Activated CD8-positive, alpha-beta T cell treated with anti-CD3 and anti-CD28 coated beads for 36 hours (primary cell): ENCODE measurements at regions of chr1 and their contacts with region 1.

Region 1: GRCh38 chr1:94854458-94855306 is 34.5 kb downstream of the SLC44A3 start:
- DNase-seq: peak; percentile 91
- ATAC-seq: peak; percentile 99
- H3K4me3 Mint-ChIP-seq: no peak overlapping the region
- H3K27ac Mint-ChIP-seq: no peak overlapping the region
- H3K4me1 Mint-ChIP-seq: no peaks in the 10 kb centered on the region
- H3K27me3 Mint-ChIP-seq: peaks cover 2% of the 10 kb centered on the region
- CTCF ChIP-seq: peak; percentile 87

Region 2: DNA sequence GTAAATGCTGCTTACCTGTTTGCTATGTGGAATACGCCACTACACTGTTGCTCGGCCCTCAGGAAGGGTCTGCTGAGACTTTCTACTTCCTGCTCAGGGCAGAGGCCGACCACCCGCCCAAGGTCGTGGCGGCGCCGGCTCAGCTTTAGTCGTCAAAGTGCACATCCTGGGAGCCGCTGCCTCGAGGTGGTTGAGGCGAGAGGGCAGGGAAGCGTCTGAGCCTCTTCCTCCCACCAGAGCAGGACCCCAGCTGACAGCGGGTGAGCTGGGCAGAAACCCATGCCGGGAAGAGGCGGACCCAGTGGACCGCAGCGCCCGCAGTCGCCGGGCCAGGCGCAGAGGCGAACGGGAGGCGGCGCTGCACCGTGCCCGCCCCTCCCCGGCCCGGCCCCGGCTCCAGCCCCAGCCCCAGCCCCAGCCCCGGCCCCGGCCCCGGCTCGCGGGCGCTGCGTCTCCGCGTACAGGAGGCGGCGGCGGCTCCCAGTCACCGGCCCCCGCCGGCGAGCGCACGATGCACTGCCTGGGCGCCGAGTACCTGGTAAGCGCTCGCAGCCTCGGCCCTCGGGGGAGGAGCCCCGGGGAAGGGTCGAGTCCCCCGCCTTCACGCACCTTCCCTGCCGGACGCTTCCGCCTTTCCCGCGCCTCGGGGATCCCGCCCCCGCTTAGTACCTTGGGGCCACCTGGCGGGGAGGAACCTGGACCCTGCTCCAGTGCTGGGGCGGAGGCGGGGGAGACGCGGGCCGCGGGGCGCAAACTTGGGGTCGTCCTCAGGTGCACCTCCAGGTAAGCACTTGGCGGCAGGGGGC is 34.5 kb before region 1 on chr1 and contains the start of gene SLC44A3:
- CTCF ChIA-PET with region 1: no interaction called
- POLR2A ChIA-PET with region 1: no interaction called
- intact Hi-C with region 1: no loop called
- DNase-seq: peak; percentile 30
- ATAC-seq: peak; percentile 77
- H3K4me3 Mint-ChIP-seq: peak within 1 kb of the TSS; percentile 54
- H3K27ac Mint-ChIP-seq: no peak within 1 kb of the TSS
- H3K4me1 Mint-ChIP-seq: peaks cover 3% of the 10 kb centered on the region
- H3K27me3 Mint-ChIP-seq: peaks cover 42% of the 10 kb centered on the region
- CTCF ChIP-seq: no peak
- total RNA-seq, gene SLC44A3: not detected

Region 3: DNA sequence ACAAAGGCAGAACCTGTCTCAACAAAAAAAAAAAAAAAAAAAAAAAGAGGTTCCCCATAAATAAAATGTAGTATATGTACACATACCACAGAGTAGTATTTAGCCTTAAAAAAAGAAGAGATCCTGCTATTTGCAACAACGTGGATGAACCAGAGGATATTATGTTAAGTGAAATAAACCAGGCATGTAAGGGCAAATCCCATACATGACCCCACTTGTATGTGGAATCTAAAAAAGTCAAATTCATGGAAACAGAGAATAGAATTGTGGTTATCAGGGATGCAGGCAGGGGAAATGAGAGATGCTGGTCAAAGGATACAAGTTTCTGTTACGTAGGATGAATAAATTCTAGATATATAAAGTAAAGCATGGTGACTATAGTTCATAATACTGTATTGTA is 17.8 kb before region 1 on chr1:
- CTCF ChIA-PET with region 1: interaction called, 12 read pairs
- POLR2A ChIA-PET with region 1: no interaction called
- intact Hi-C with region 1: no loop called
- DNase-seq: no peak
- ATAC-seq: no peak
- H3K4me3 Mint-ChIP-seq: no peak overlapping the region
- H3K27ac Mint-ChIP-seq: no peak overlapping the region
- H3K4me1 Mint-ChIP-seq: no peaks in the 10 kb centered on the region
- H3K27me3 Mint-ChIP-seq: peaks cover 5% of the 10 kb centered on the region
- CTCF ChIP-seq: no peak

Region 4: DNA sequence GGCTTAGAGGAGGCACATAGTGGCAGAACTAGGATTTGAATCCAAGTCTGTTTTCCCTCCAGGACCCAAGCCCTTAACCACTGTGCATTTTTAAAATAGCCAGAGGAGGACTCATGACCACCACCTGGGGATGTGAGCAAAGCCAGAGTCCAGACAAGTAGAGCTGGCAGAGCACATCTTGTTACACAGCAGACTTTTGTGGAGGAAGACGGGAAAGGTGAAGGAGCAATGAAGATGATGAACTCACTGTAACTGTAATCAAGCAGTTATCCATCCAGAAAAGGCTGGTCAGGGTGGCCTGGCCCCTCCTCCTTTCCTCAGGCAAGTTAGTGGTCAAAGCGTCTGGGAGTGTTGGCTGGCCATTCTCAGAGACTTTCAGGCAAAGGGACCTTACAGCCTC is 16.3 kb after region 1 on chr1:
- CTCF ChIA-PET with region 1: interaction called, 31 read pairs
- POLR2A ChIA-PET with region 1: no interaction called
- intact Hi-C with region 1: no loop called
- DNase-seq: no peak
- ATAC-seq: no peak
- H3K4me3 Mint-ChIP-seq: no peak overlapping the region
- H3K27ac Mint-ChIP-seq: no peak overlapping the region
- H3K4me1 Mint-ChIP-seq: peaks cover 7% of the 10 kb centered on the region
- H3K27me3 Mint-ChIP-seq: no peaks in the 10 kb centered on the region
- CTCF ChIP-seq: no peak

Region 5: DNA sequence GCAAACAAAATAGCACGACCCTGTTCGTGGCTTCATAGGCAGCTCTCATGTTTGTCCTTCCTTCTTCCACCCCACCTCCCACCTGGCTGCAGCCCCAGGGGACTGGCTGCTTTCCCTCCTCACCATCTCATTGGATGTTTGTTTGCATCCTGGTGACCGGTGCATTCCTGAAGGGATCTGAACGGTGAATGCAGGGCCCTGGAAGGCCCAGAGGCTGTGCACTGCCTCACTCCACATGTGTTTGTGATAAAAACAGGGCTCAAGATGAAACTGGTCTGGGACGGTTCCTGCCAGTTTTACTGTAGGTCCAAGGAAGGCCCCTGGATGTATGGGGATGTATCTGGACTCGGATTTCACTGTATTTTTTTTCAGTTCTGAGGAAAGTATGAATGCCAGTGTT is 29.4 kb after region 1 on chr1:
- CTCF ChIA-PET with region 1: interaction called, 13 read pairs
- POLR2A ChIA-PET with region 1: no interaction called
- intact Hi-C with region 1: no loop called
- DNase-seq: no peak
- ATAC-seq: no peak
- H3K4me3 Mint-ChIP-seq: no peak overlapping the region
- H3K27ac Mint-ChIP-seq: peak overlapping the region; percentile 51
- H3K4me1 Mint-ChIP-seq: peaks cover 10% of the 10 kb centered on the region
- H3K27me3 Mint-ChIP-seq: no peaks in the 10 kb centered on the region
- CTCF ChIP-seq: no peak

Region 6: GRCh38 chr1:95023399-95024043 is 168.8 kb after region 1 on chr1:
- CTCF ChIA-PET with region 1: interaction called, 16 read pairs
- POLR2A ChIA-PET with region 1: no interaction called
- intact Hi-C with region 1: no loop called
- DNase-seq: no peak
- ATAC-seq: no peak
- H3K4me3 Mint-ChIP-seq: no peak overlapping the region
- H3K27ac Mint-ChIP-seq: no peak overlapping the region
- H3K4me1 Mint-ChIP-seq: no peaks in the 10 kb centered on the region
- H3K27me3 Mint-ChIP-seq: no peaks in the 10 kb centered on the region
- CTCF ChIP-seq: no peak

Region 7: DNA sequence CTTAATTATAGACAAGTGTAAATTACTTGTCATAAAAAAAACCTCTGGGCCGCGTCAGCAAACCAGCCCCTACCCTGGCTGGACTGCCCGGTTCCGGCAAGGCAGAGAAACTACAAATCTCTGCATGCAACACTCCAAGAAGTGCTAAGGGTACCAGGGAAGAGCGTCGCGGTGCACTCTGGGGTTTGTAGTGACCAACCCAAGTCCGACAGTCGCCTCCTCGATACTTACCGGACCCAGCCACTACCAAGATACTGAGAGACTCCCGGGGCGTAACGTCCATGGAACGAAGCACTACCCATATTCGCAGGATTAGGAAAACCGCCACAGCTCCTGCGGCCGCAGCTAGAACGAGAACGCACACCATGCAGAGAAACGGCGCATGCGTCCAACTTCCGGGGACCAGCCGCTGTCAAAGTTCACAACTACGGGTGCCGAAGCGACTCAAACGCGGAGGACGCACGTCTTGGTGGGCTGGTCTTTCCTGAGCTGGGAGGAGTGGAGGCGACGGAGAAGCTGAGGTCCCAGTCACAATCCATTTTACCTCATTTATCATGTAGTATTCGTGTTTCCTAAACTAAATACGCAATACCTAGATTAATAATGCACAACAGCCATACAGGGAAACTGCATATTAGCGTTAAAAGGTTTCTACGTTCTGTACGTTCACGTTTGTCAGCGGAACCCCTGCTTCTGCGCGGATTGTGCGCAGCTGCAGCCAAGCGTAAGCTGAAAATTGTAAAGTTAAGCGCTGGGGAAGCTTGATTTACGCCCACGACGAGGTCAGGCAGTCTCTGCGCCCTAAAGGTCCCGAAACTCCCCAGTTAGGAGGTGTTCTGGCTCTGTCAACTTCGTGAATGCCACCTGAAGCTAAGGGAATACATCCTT is 218.1 kb after region 1 on chr1 and contains the start of gene ALG14:
- CTCF ChIA-PET with region 1: interaction called, 20 read pairs
- POLR2A ChIA-PET with region 1: no interaction called
- intact Hi-C with region 1: no loop called
- DNase-seq: peak; percentile 95
- ATAC-seq: peak; percentile 93
- H3K4me3 Mint-ChIP-seq: peak within 1 kb of the TSS; percentile 93
- H3K27ac Mint-ChIP-seq: peak within 1 kb of the TSS; percentile 99
- H3K4me1 Mint-ChIP-seq: peaks cover 8% of the 10 kb centered on the region
- H3K27me3 Mint-ChIP-seq: no peaks in the 10 kb centered on the region
- CTCF ChIP-seq: no peak
- total RNA-seq, gene ALG14: 2.5 to 2.9 TPM